ENCODE measurements at regions of chr18 and their contacts with region 1.

Region 1: GRCh38 chr18:40013001-40013609 is 1941.9 kb upstream of the PIK3C3 start:
- DNase-seq: no peak
- H3K4me3 Mint-ChIP-seq: no peak overlapping the region
- H3K27ac Mint-ChIP-seq: no peak overlapping the region
- H3K4me1 Mint-ChIP-seq: peaks cover 26% of the 10 kb centered on the region
- H3K27me3 Mint-ChIP-seq: no peaks in the 10 kb centered on the region
- CTCF ChIP-seq: no peak

Region 2: GRCh38 chr18:39635966-39636365 is 377.1 kb before region 1 on chr18:
- CTCF ChIA-PET with region 1: no interaction called
- intact Hi-C with region 1: loop called (anchors 10 kb)
- DNase-seq: no peak
- H3K4me3 Mint-ChIP-seq: no peak overlapping the region
- H3K27ac Mint-ChIP-seq: no peak overlapping the region
- H3K4me1 Mint-ChIP-seq: peaks cover 42% of the 10 kb centered on the region
- H3K27me3 Mint-ChIP-seq: no peaks in the 10 kb centered on the region
- CTCF ChIP-seq: no peak

Region 3: GRCh38 chr18:39841482-39842365 is 171.4 kb before region 1 on chr18:
- CTCF ChIA-PET with region 1: no interaction called
- intact Hi-C with region 1: loop called (anchors 10 kb)
- DNase-seq: peak; percentile 74
- H3K4me3 Mint-ChIP-seq: peak overlapping the region; percentile 87
- H3K27ac Mint-ChIP-seq: no peak overlapping the region
- H3K4me1 Mint-ChIP-seq: peaks cover 12% of the 10 kb centered on the region
- H3K27me3 Mint-ChIP-seq: no peaks in the 10 kb centered on the region
- CTCF ChIP-seq: peak; percentile 54

Region 4: DNA sequence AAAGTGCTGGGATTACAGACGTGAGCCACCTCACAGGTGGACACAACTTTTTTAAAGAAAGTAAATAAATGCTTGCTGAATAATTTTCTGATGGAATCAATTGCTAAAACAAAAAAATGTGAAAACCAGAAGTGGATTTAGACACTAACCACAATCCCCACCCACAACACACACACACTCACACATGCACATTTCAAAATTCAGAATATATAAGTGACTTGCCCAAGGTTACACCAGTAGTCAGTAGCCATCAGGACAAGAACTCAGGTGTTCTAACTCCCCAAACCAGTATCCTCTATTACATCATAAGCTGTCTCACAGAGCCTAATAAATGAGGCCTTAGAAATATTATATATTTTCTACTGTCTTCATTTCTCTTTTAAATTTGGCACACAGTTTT is 18.3 kb after region 1 on chr18:
- CTCF ChIA-PET with region 1: no interaction called
- intact Hi-C with region 1: no loop called
- DNase-seq: no peak
- H3K4me3 Mint-ChIP-seq: no peak overlapping the region
- H3K27ac Mint-ChIP-seq: peak overlapping the region; percentile 54
- H3K4me1 Mint-ChIP-seq: peaks cover 16% of the 10 kb centered on the region
- H3K27me3 Mint-ChIP-seq: no peaks in the 10 kb centered on the region
- CTCF ChIP-seq: no peak

Region 5: DNA sequence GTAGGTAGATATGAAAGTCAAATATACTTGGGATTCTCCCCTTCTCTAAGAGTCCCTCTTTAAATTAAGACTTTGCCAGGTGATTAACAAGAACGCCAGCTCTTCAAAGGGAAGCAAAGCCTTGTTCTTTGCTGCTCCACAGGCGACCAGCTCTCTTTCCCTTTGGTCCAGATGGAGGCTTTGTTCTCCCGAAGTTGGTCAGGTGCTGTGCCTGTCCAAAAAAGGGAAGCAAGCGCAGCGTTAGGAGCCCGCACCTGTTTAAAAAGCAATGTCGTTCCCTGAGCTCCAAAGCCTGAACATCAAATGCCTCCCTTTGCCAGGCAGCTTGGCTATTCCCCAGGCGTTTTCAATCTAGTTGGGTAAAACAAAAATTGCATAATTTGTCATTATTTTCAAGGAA is 28.8 kb after region 1 on chr18:
- CTCF ChIA-PET with region 1: no interaction called
- intact Hi-C with region 1: no loop called
- DNase-seq: no peak
- H3K4me3 Mint-ChIP-seq: no peak overlapping the region
- H3K27ac Mint-ChIP-seq: no peak overlapping the region
- H3K4me1 Mint-ChIP-seq: no peaks in the 10 kb centered on the region
- H3K27me3 Mint-ChIP-seq: no peaks in the 10 kb centered on the region
- CTCF ChIP-seq: no peak